GM12878 (cell line): ENCODE measurements at regions of chr7 and their contacts with region 1.

Region 1: GRCh38 chr7:123871998-123872867 is 27.3 kb downstream of the HYAL4 start:
- DNase-seq: no peak
- ATAC-seq: peak; percentile 98
- H3K4me3 ChIP-seq: no peak overlapping the region
- H3K27ac ChIP-seq: no peak overlapping the region
- H3K4me1 ChIP-seq: no peaks in the 10 kb centered on the region
- H3K27me3 ChIP-seq: no peaks in the 10 kb centered on the region
- CTCF ChIP-seq: peak; percentile 61 to 86 (median 63)
- EP300 ChIP-seq: no peak
- POLR2A ChIP-seq: no peak
- RAD21 ChIP-seq: peak; percentile 88

Region 2: GRCh38 chr7:123624527-123625183 is 247.6 kb before region 1 on chr7:
- CTCF ChIA-PET with region 1: interaction called, 26 read pairs
- POLR2A ChIA-PET with region 1: no interaction called
- RAD21 ChIA-PET with region 1: interaction called, 13 read pairs
- SMC1A ChIA-PET with region 1: interaction called, 8 read pairs
- in situ Hi-C with region 1: no loop called
- intact Hi-C with region 1: loop called (anchors 2 kb)
- DNase-seq: peak; percentile 25
- ATAC-seq: peak; percentile 97
- H3K4me3 ChIP-seq: no peak overlapping the region
- H3K27ac ChIP-seq: no peak overlapping the region
- H3K4me1 ChIP-seq: no peaks in the 10 kb centered on the region
- H3K27me3 ChIP-seq: no peaks in the 10 kb centered on the region
- CTCF ChIP-seq: peak; percentile 68 to 94 (median 91)
- EP300 ChIP-seq: no peak
- POLR2A ChIP-seq: no peak
- RAD21 ChIP-seq: peak; percentile 40

Region 3: DNA sequence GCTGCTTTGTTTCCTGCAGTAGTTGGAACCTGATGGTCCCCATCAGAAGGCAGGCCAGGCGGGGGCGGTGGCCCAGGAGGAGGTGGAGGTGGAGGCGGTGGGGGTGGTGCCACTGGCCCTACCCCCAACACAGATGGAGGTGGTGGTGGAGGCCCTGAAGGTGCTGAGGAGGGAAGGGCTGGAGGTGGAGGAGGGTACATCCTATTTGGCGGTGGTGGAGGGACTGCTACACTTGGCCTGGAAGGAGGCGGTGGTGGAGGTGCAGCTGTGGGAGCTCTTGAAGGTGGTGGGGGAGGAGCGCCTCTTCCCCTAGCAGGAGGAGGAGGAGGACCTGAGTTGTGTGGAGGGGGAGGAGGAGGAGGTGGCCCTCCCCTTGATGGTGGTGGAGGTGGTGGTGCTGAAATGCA is 179.8 kb before region 1 on chr7:
- CTCF ChIA-PET with region 1: interaction called, 4 read pairs
- POLR2A ChIA-PET with region 1: no interaction called
- RAD21 ChIA-PET with region 1: interaction called, 4 read pairs
- SMC1A ChIA-PET with region 1: interaction called, 3 read pairs
- in situ Hi-C with region 1: loop called (anchors 5 kb)
- intact Hi-C with region 1: no loop called
- DNase-seq: no peak
- ATAC-seq: no peak
- H3K4me3 ChIP-seq: no peak overlapping the region
- H3K27ac ChIP-seq: no peak overlapping the region
- H3K4me1 ChIP-seq: no peaks in the 10 kb centered on the region
- H3K27me3 ChIP-seq: no peaks in the 10 kb centered on the region
- CTCF ChIP-seq: no peak
- EP300 ChIP-seq: no peak
- POLR2A ChIP-seq: no peak
- RAD21 ChIP-seq: no peak

Region 4: DNA sequence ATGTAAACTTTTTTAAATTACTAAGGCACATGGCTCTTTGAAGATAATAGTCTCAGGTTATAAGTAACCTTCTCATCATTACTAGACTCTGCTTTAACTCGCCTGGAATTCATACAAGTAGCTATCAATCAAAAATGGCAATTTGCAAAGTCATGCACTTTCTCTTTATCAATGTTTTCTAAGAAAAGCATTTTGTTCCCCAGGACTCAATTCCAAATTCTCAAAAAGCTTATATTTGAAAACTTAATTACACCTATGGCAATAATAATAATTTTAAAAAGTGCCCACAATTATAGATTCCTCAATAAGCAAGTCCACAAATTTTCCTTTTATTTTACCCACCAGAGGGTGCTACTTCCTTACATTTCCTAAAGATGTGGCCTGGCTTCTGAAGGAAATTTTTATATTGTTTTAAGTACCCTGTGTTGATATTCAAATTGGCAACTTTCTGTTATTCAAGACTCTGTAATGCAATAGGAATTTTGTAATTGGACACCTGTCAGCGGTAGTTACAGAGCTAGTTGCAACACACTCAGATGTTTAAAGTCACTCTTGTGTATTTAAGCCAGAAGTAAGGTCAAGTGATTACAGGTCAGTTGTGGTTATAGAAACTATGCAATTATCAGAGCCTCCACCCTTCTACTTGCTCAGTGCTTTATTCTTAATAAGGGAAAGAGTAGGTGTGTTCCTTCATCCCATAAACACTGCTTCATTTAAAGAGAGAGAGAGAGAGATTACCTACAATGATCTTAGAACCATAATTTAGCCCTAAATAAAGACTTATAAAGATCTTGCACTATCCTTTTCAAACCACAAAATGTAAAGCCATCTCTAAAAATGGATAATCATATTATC is 74.3 kb before region 1 on chr7:
- CTCF ChIA-PET with region 1: interaction called, 208 read pairs
- POLR2A ChIA-PET with region 1: interaction called, 4 read pairs
- RAD21 ChIA-PET with region 1: interaction called, 90 read pairs
- SMC1A ChIA-PET with region 1: interaction called, 93 read pairs
- in situ Hi-C with region 1: no loop called
- intact Hi-C with region 1: loop called (anchors 2 kb)
- DNase-seq: no peak
- ATAC-seq: peak; percentile 78
- H3K4me3 ChIP-seq: no peak overlapping the region
- H3K27ac ChIP-seq: no peak overlapping the region
- H3K4me1 ChIP-seq: no peaks in the 10 kb centered on the region
- H3K27me3 ChIP-seq: no peaks in the 10 kb centered on the region
- CTCF ChIP-seq: peak in 2 of 3 experiments; percentile 28 to 59; a peak in 3 of 6 replicates
- EP300 ChIP-seq: no peak
- POLR2A ChIP-seq: no peak
- RAD21 ChIP-seq: peak; percentile 88

Region 5: DNA sequence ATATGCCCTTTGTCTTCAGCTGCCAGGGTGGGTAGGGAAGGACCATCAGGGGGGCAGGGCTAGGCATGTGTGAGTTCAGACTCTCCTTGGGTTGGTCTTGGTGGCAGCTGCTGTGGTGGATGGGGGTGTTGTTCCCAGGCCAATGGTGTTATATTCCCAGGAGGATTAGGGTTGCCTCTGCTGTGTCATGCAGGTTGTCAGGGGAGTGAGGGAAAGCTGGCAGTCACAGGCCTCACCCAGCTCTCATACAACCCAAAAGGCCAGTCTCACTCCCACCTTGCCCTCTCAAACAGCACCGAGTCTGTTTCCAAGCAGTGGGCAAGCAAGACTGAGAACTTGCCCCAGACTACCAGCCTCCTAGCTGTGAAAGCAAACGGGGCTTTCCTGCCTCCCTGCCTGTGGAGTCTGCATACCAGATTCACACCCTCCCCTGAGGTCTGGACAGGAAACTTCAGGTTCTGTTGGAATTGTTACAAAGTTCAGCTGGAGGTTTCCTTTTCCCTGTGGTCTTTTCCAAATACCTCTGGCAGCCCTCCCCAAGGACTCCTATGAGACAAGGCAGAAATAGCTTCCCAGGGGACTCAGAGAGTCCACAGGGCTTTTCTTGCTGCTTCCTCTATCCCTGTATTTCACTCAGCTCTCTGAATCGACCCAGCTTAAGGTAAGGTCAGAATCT is 25.9 kb before region 1 on chr7:
- CTCF ChIA-PET with region 1: interaction called, 20 read pairs
- POLR2A ChIA-PET with region 1: no interaction called
- RAD21 ChIA-PET with region 1: interaction called, 7 read pairs
- SMC1A ChIA-PET with region 1: no interaction called
- in situ Hi-C with region 1: no loop called
- intact Hi-C with region 1: no loop called
- DNase-seq: peak; percentile 7
- ATAC-seq: peak; percentile 93
- H3K4me3 ChIP-seq: no peak overlapping the region
- H3K27ac ChIP-seq: no peak overlapping the region
- H3K4me1 ChIP-seq: no peaks in the 10 kb centered on the region
- H3K27me3 ChIP-seq: no peaks in the 10 kb centered on the region
- CTCF ChIP-seq: no peak
- EP300 ChIP-seq: no peak
- POLR2A ChIP-seq: no peak
- RAD21 ChIP-seq: no peak